ENCODE measurements at regions of chr10 and their contacts with region 1.

Region 1: DNA sequence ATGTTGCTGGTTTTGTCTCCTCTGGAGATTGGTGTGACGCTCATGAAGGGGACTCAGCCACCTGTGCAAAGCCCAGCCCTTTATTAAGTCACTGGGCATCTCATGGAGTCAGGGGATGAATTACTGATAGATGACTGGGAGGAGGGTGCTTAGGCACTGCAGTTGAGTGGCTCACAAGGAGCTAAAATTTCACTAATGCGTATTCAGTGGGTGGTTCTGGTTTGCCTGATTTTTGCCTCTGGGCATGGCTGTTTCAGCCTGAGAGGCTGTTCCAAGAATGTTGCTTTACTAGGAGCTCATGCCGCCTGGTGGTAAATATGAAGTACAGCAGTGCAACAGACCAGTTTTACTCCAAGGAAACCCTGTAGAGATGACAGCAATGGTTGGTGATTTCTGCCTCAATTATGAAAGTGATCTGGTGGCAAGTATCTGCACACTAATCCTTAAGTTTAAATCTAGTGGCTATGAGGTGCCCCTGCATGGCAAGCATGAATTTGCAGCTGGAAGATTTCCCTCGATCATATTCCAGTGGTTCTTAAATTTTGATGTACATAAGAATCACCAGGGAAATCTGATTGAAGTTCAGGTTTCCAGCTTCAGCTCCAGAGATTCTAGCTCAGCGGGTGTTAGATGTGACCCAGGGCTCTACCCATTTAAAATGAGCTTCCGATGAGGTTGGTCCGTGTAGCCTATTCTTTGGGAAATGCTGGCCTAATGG is 19.9 kb downstream of the ACTA2 start:
- DNase-seq: peak; percentile 44
- H3K4me3 ChIP-seq: no peak overlapping the region; a peak in 1 of 4 replicates
- H3K27ac ChIP-seq: 0 out of 4 replicates have a peak overlapping the region, but pooled peaks of 1 of the 2 experiments have one; percentile 20
- H3K4me1 ChIP-seq: peaks cover 7 to 11% of the 10 kb centered on the region in 2 experiments; a peak in 3 of 4 replicates
- H3K27me3 ChIP-seq: no peaks in the 10 kb centered on the region
- CTCF ChIP-seq: peak; percentile 90
- EP300 ChIP-seq: 0 out of 4 replicates have a peak, but pooled peaks of 1 of the 2 experiments have one; percentile 34
- RAD21 ChIP-seq: peak; percentile 94

Region 2: GRCh38 chr10:88565072-88565471 is 367.6 kb before region 1 on chr10:
- CTCF ChIA-PET with region 1: interaction called, 58 read pairs
- POLR2A ChIA-PET with region 1: no interaction called
- DNase-seq: peak; percentile 22
- H3K4me3 ChIP-seq: no peak overlapping the region
- H3K27ac ChIP-seq: no peak overlapping the region
- H3K4me1 ChIP-seq: 0 out of 4 replicates have a peak, but pooled peaks cover 0 to 3% of the 10 kb centered on the region in 2 experiments
- H3K27me3 ChIP-seq: no peaks in the 10 kb centered on the region
- CTCF ChIP-seq: peak; percentile 76
- EP300 ChIP-seq: no peak
- RAD21 ChIP-seq: peak; percentile 87

Region 3: DNA sequence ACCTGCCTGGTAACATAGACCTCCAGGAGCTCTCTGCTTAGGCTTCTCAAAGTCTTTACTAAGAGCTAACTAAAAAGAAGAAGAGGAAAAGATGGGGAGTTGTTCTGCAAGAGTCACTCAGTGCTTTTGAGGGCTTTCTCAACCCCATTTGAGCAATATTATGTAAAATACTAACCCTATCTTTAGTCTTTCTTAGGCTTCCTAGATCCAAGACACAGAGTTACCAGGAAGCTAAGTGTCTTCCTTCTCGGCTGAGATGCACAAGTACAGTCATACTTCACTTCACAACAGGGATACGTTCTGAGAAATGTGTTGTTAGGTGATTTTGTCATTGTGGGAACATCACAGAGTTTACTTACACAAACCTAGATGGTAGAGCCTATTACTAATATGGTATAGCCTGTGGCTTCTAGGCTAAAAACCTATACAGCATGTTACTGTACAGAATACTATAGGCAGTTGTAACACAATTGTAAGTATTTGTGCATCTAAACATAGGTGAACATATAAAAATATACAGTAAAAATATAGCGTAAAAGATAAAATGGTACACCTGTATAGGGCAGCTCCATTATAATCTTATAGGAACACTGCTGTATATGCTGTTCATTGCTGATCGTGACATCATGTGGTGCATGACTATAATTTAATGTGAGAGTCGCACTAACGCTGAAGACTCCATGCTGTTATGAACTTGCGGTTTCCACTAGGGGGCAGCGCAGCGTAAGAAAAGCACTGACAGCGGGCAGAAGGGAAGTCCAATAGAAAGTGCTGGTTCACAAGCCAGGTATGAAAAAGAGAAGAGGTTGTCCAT is 97.4 kb before region 1 on chr10:
- CTCF ChIA-PET with region 1: interaction called, 425 read pairs
- POLR2A ChIA-PET with region 1: interaction called, 9 read pairs
- DNase-seq: peak; percentile 64
- H3K4me3 ChIP-seq: no peak overlapping the region
- H3K27ac ChIP-seq: no peak overlapping the region
- H3K4me1 ChIP-seq: peaks cover 0 to 2% of the 10 kb centered on the region in 2 experiments; a peak in 1 of 4 replicates
- H3K27me3 ChIP-seq: no peaks in the 10 kb centered on the region
- CTCF ChIP-seq: peak; percentile 94
- EP300 ChIP-seq: no peak
- RAD21 ChIP-seq: peak; percentile 99

Region 4: DNA sequence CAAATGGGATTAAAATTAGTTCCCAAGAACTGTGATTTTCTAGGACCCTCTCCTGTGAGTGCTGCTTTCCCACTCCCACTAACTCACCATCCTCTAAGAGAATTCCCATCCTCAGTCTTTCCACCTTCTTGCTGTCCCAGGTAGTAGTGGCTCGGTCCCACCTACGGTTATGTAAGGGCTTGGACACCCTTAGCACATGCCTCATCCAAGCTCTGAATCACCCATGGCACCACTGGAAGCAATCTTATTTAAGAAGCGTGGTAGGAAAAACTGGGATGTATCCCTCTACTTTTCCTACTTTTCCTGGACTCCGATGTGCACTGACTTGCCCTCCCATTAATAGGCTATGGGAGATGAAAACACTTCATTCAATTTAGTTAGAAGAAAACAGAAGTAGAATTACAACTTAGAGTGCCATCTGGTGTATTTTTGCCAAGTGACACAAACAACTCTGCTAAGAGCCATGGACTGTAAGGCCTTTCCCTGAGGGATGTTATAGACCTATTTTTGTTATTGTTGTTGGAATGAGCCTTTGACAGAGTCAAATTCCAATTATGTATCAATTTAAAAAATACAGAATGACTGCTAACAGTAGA is 67.3 kb before region 1 on chr10:
- CTCF ChIA-PET with region 1: interaction called, 15 read pairs
- POLR2A ChIA-PET with region 1: no interaction called
- DNase-seq: no peak
- H3K4me3 ChIP-seq: no peak overlapping the region
- H3K27ac ChIP-seq: no peak overlapping the region
- H3K4me1 ChIP-seq: no peaks in the 10 kb centered on the region; a peak in 1 of 4 replicates
- H3K27me3 ChIP-seq: no peaks in the 10 kb centered on the region
- CTCF ChIP-seq: peak; percentile 37
- EP300 ChIP-seq: no peak
- RAD21 ChIP-seq: peak; percentile 24; the same call in 1 of the 2 replicates

Region 5: GRCh38 chr10:88958721-88959120 is 26.0 kb after region 1 on chr10:
- CTCF ChIA-PET with region 1: interaction called, 20 read pairs
- POLR2A ChIA-PET with region 1: no interaction called
- DNase-seq: no peak
- H3K4me3 ChIP-seq: no peak overlapping the region
- H3K27ac ChIP-seq: no peak overlapping the region
- H3K4me1 ChIP-seq: peaks cover 0 to 2% of the 10 kb centered on the region in 2 experiments; a peak in 1 of 4 replicates
- H3K27me3 ChIP-seq: no peaks in the 10 kb centered on the region
- CTCF ChIP-seq: no peak
- EP300 ChIP-seq: no peak
- RAD21 ChIP-seq: no peak

Region 6: DNA sequence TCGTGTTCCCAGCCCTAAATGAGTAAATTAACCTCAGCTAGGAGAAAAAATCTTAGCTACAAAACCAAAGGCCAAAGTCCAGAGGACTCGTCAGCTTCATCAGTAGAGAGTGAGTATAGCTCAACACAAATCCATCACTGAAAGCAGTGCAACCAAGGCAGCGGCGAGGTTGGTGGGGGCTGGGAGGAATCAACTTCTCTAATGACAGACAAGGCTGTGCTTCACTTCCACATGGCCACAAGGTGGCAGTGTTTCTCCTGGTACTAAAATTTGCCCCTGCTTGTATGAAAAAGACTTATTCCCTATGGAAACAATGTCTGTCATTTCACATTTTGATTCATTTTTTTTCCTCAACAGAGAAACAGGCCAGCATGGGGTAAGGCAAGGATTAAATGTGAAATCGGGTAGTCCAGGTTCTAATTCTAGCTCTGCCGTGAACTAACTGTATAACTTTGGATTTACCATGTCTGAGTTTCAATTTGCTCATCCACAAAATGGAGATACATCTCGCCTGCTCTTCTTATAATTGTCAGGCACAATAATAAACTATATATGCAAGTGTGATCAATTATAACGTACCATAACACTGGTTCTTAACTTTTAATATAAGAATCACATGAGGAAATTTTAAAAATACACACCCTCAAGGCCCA is 97.2 kb after region 1 on chr10:
- CTCF ChIA-PET with region 1: interaction called, 50 read pairs
- POLR2A ChIA-PET with region 1: no interaction called
- DNase-seq: peak; percentile 60
- H3K4me3 ChIP-seq: no peak overlapping the region; a peak in 1 of 4 replicates
- H3K27ac ChIP-seq: no peak overlapping the region
- H3K4me1 ChIP-seq: peaks cover 7 to 14% of the 10 kb centered on the region in 2 experiments; a peak in 3 of 4 replicates
- H3K27me3 ChIP-seq: no peaks in the 10 kb centered on the region
- CTCF ChIP-seq: peak; percentile 91
- EP300 ChIP-seq: no peak
- RAD21 ChIP-seq: peak; percentile 94